HepG2 (cell line): ENCODE measurements at regions of chr13 and their contacts with region 1.

Region 1: DNA sequence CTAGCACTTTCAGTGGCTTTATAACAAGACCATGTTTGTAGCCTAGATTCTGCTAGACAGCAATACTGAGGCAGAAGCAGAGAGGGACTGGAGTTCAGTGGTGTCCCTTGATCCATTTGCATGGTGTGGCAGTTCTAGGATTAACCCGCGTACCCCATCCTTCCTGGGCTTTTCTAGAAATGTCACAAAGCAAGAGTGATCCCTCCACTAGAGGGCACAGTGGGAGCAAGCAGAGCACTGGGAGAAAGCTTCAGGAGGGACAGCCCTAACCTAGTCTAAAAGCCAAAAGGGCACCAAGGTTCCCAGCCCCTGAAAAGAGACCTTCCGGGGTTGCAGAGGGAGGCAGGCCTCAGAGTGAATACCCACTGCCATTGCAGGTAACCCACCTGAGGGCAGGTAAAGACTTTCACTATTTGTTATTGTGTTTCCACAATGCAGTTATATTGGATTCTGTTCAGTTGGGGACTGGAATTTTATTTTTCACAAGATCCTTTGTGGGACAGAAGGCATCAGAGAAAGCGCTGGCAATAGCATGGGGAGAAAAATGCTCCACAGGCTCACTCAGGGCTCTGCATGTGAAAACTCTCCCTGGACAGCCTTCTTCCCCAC is 170.6 kb downstream of the FLT1 start:
- DNase-seq: peak; percentile 50
- ATAC-seq: peak; percentile 92
- H3K4me3 ChIP-seq: no peak overlapping the region
- H3K27ac ChIP-seq: no peak overlapping the region
- H3K4me1 ChIP-seq: peaks cover 13% of the 10 kb centered on the region
- H3K27me3 ChIP-seq: no peaks in the 10 kb centered on the region; a peak in 1 of 5 replicates
- CTCF ChIP-seq: peak; percentile 81
- EP300 ChIP-seq: no peak
- POLR2A ChIP-seq: no peak
- RAD21 ChIP-seq: 0 out of 2 replicates have a peak, but pooled peaks have one; percentile 12

Region 2: GRCh38 chr13:28058866-28059624 is 265.2 kb before region 1 on chr13:
- CTCF ChIA-PET with region 1: no interaction called
- POLR2A ChIA-PET with region 1: no interaction called
- in situ Hi-C with region 1: no loop called
- intact Hi-C with region 1: loop called (anchors 2 kb)
- DNase-seq: peak; percentile 48
- ATAC-seq: peak; percentile 82
- H3K4me3 ChIP-seq: no peak overlapping the region
- H3K27ac ChIP-seq: no peak overlapping the region
- H3K4me1 ChIP-seq: no peaks in the 10 kb centered on the region
- H3K27me3 ChIP-seq: peaks cover 1 to 12% of the 10 kb centered on the region in 2 experiments; a peak in 4 of 5 replicates
- CTCF ChIP-seq: peak; percentile 68
- EP300 ChIP-seq: no peak
- POLR2A ChIP-seq: no peak
- RAD21 ChIP-seq: no peak

Region 3: DNA sequence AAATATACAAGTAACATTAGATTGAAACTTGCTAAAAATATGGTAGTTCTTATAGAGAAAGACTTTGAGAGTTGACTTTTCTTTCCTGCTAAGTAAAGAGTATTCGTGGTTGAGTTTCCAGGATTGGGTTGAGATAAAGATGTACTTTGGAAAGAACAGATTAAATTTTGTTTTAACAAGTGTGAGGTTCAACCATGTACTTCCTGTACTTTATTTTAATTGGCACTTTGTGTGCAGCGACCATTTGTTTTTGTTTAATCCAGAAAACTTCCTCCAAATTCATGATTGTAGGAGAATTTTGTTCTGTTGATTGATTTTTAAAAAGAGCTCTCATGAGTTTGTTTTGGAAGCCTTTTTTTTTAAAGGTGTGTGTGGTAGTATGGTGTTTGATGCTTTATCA is 139.0 kb before region 1 on chr13:
- CTCF ChIA-PET with region 1: no interaction called
- POLR2A ChIA-PET with region 1: no interaction called
- in situ Hi-C with region 1: no loop called
- intact Hi-C with region 1: no loop called
- DNase-seq: no peak
- ATAC-seq: no peak
- H3K4me3 ChIP-seq: no peak overlapping the region
- H3K27ac ChIP-seq: no peak overlapping the region
- H3K4me1 ChIP-seq: no peaks in the 10 kb centered on the region
- H3K27me3 ChIP-seq: no peaks in the 10 kb centered on the region
- CTCF ChIP-seq: no peak
- EP300 ChIP-seq: no peak
- POLR2A ChIP-seq: no peak
- RAD21 ChIP-seq: no peak

Region 4: DNA sequence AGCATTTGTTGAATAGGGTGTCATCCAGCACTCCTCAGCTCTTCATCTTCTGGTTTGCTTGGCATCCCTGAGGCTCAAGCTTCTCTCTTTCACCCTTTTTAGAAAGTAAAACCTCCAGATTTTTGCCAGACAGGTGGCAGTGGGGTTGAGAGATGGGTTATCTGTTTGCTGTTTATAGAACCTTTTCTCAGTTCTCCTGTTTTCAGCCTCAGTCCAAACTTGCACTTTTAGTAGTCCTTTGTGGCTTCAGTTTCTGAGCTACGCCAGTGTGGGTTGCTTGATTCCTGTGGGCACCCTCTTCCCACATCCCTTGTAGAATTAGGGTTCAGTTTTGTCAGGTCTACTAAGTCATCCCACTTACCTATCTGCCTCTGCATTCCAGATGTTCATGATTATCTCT is 38.0 kb before region 1 on chr13:
- CTCF ChIA-PET with region 1: no interaction called
- POLR2A ChIA-PET with region 1: no interaction called
- in situ Hi-C with region 1: no loop called
- intact Hi-C with region 1: no loop called
- DNase-seq: no peak
- ATAC-seq: no peak
- H3K4me3 ChIP-seq: no peak overlapping the region
- H3K27ac ChIP-seq: no peak overlapping the region
- H3K4me1 ChIP-seq: no peaks in the 10 kb centered on the region
- H3K27me3 ChIP-seq: no peaks in the 10 kb centered on the region
- CTCF ChIP-seq: no peak
- EP300 ChIP-seq: no peak
- POLR2A ChIP-seq: no peak
- RAD21 ChIP-seq: no peak

Region 5: GRCh38 chr13:28636674-28637317 is 312.5 kb after region 1 on chr13:
- CTCF ChIA-PET with region 1: no interaction called
- POLR2A ChIA-PET with region 1: no interaction called
- in situ Hi-C with region 1: loop called (anchors 5 kb)
- intact Hi-C with region 1: loop called (anchors 1 kb)
- DNase-seq: peak; percentile 58
- ATAC-seq: peak; percentile 94
- H3K4me3 ChIP-seq: no peak overlapping the region
- H3K27ac ChIP-seq: no peak overlapping the region
- H3K4me1 ChIP-seq: peaks cover 21% of the 10 kb centered on the region
- H3K27me3 ChIP-seq: no peaks in the 10 kb centered on the region
- CTCF ChIP-seq: peak; percentile 78
- EP300 ChIP-seq: no peak
- POLR2A ChIP-seq: no peak
- RAD21 ChIP-seq: peak; percentile 53; the same call in 1 of the 2 replicates

Region 6: DNA sequence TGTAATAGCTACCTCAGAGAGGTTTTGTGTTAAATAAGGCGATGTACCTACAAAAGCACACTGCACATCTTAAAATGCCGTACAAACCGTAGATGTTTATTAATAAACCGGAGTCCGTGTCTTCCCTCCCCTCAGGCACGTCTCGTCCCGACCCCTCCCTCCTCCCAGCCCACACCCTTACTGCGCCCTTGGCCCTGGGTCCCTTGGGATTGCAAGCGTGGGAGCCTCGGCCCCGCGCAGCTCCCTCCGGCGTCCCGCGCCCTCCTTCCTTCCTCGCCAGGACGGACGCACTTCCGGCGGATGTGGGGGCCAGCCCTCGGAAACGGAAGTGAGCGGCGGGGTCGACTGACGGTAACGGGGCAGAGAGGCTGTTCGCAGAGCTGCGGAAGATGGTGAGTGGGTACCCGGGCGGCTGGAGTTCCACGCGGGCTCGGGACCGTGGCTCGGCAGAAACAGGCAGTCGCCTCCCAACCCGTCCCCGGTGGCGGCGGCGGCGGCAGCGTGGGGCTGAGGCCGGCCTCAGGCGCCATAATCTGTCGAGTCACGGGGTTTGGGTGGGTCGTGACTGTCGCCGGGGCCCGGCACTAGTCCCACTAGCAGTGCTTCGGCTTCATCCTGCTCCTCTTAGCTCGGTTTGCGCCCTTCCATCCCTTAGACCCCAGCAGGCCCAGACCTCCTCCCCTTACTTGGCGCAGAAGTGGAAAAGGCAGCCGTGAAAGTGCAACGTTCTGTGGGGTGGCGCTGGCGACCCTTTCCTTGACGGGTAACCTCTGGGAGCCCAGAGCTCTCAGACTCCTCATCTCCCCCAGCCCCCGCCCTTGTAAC is 334.7 kb after region 1 on chr13 and contains the start of gene POMP:
- CTCF ChIA-PET with region 1: interaction called, 3 read pairs
- POLR2A ChIA-PET with region 1: no interaction called
- in situ Hi-C with region 1: no loop called
- intact Hi-C with region 1: loop called (anchors 1 kb)
- DNase-seq: peak; percentile 80
- ATAC-seq: peak; percentile 99
- H3K4me3 ChIP-seq: peak within 1 kb of the TSS; percentile 91 to 96 (median 95)
- H3K27ac ChIP-seq: peak within 1 kb of the TSS; percentile 72
- H3K4me1 ChIP-seq: peaks cover 51% of the 10 kb centered on the region
- H3K27me3 ChIP-seq: no peaks in the 10 kb centered on the region; a peak in 1 of 5 replicates
- CTCF ChIP-seq: peak; percentile 17
- EP300 ChIP-seq: no peak; a peak in 1 of 4 replicates
- POLR2A ChIP-seq: peak; percentile 70 to 94
- RAD21 ChIP-seq: no peak
- total RNA-seq, gene POMP: 118 and 183 TPM in 2 replicates

Region 7: DNA sequence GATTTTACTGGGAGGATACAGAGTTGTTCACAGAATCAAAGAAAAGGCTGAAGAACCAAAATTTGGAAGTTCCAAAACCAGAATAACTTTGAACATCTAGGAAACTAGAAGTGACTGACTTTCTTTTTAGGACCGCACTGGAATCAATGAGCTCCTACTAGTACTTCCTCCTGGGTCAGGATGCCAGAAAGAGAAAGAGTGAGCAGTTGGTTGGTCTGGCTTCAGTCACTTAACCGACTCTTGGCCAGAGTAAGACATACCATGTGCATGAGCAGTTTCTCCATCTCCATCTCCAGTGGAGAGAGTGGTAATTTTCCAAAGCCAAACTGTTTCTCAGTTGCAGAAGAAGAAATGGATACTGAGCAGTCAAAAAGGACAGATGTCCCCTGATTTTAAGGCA is 468.7 kb after region 1 on chr13:
- CTCF ChIA-PET with region 1: interaction called, 8 read pairs
- POLR2A ChIA-PET with region 1: no interaction called
- in situ Hi-C with region 1: loop called (anchors 10 kb)
- intact Hi-C with region 1: loop called (anchors 1 kb)
- DNase-seq: no peak
- ATAC-seq: no peak
- H3K4me3 ChIP-seq: no peak overlapping the region
- H3K27ac ChIP-seq: no peak overlapping the region
- H3K4me1 ChIP-seq: peaks cover 11% of the 10 kb centered on the region; the same call in 1 of the 2 replicates
- H3K27me3 ChIP-seq: peaks cover 0 to 1% of the 10 kb centered on the region in 2 experiments; a peak in 2 of 5 replicates
- CTCF ChIP-seq: no peak
- EP300 ChIP-seq: no peak
- POLR2A ChIP-seq: no peak
- RAD21 ChIP-seq: no peak